Gastrocnemius medialis (tissue), 4 donors: ENCODE measurements at regions of chr16 and their contacts with region 1.

Region 1: GRCh38 chr16:46757339-46758050 is 9.4 kb upstream of the MYLK3 start:
- DNase-seq: peak; percentile 86 to 89
- ATAC-seq: peak; percentile 82 to 86
- H3K4me3 ChIP-seq: peak overlapping the region; percentile 37 to 53 (median 42)
- H3K27ac ChIP-seq: peak overlapping the region; percentile 78 to 93 (median 90)
- H3K4me1 ChIP-seq: peaks cover 29 to 39% of the 10 kb centered on the region in 2 donors
- H3K27me3 ChIP-seq: no peaks in the 10 kb centered on the region
- CTCF ChIP-seq: peak in 1 of 5 experiments; percentile 17
- POLR2A ChIP-seq: no peak

Region 2: GRCh38 chr16:46701615-46702014 is 55.9 kb before region 1 on chr16:
- in situ Hi-C with region 1: no loop called
- intact Hi-C with region 1: no loop called
- DNase-seq: no peak
- ATAC-seq: no peak
- H3K4me3 ChIP-seq: no peak overlapping the region
- H3K27ac ChIP-seq: no peak overlapping the region
- H3K4me1 ChIP-seq: no peaks in the 10 kb centered on the region
- H3K27me3 ChIP-seq: no peaks in the 10 kb centered on the region
- CTCF ChIP-seq: no peak
- POLR2A ChIP-seq: no peak

Region 3: DNA sequence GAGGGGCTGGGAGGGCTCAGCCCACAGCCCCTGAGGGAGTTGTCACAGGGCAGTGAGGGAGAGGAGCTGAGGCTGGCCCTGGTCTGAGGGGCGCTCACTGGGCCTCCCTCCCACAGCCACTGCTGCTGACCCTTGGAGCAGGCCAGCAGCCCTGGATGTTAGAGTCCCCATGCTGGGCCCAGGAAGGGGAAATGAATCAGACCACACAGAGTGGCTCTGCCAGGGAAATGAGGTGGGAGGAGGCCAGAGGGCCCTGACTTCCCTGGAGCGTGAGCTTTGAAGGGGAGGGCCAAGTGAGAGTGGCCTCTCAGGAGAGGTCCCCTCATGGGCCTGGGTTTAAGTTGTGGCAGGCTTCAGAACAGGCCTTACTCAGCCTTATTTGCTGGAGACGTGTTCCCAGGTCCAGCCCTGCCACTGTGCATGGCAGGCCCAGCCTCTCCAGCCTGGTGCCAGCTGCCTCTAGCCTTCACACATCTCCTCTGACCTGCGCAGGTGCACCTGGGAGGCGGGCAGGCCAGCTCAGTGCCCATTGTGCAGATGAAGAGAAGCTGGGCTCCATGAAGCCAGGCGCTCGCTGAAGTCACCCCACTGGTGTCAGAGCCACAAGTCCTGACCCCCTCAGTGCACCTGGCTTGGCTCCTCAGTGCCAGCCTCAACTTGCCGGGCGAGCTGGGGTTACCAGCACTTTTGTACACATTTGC is 142.1 kb after region 1 on chr16:
- in situ Hi-C with region 1: no loop called
- intact Hi-C with region 1: loop called (anchors 10 kb)
- DNase-seq: no peak
- ATAC-seq: no peak
- H3K4me3 ChIP-seq: no peak overlapping the region
- H3K27ac ChIP-seq: peak overlapping the region; percentile 48 to 63 (median 56)
- H3K4me1 ChIP-seq: peaks cover 28 to 39% of the 10 kb centered on the region in 2 donors
- H3K27me3 ChIP-seq: no peaks in the 10 kb centered on the region
- CTCF ChIP-seq: no peak
- POLR2A ChIP-seq: no peak